ENCODE measurements at regions of chr15 and their contacts with region 1.

Region 1: DNA sequence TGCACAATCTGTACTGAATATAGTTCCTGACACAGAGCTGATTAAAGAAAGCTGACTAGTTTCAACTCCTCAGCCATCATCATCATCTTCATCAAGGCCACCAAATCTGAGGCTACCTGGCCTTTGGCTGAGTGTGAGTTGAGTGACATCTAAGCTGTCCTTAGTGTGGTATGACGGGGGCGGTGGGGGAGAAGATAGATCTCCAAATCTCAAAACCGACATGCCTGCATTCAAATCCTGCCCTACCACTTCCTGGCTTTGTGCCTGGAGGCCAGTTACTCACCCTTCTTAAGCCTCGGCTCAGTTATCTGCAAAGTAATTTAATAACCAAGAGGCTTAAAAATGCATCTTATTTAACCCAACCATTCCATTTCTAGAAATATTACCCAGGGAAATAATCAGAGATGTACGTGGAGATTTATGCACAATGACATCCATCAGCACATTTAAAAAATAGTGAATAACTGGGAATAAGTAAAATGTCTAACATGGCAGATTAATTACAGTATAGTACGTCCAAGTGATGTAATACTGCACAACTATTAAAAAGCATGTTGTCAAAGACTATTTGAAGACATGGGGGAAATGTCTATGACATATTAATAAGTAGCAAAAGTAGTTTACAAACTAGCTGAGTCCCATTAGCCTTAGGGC is 167.4 kb downstream of the NTRK3 start:
- DNase-seq: no peak
- H3K4me3 ChIP-seq: no peak overlapping the region
- H3K27ac ChIP-seq: peak overlapping the region in 1 of 2 donors; percentile 33
- H3K4me1 ChIP-seq: peaks cover 0 to 65% (median 34%) of the 10 kb centered on the region in 4 donors
- H3K27me3 ChIP-seq: no peaks in the 10 kb centered on the region
- CTCF ChIP-seq: no peak

Region 2: DNA sequence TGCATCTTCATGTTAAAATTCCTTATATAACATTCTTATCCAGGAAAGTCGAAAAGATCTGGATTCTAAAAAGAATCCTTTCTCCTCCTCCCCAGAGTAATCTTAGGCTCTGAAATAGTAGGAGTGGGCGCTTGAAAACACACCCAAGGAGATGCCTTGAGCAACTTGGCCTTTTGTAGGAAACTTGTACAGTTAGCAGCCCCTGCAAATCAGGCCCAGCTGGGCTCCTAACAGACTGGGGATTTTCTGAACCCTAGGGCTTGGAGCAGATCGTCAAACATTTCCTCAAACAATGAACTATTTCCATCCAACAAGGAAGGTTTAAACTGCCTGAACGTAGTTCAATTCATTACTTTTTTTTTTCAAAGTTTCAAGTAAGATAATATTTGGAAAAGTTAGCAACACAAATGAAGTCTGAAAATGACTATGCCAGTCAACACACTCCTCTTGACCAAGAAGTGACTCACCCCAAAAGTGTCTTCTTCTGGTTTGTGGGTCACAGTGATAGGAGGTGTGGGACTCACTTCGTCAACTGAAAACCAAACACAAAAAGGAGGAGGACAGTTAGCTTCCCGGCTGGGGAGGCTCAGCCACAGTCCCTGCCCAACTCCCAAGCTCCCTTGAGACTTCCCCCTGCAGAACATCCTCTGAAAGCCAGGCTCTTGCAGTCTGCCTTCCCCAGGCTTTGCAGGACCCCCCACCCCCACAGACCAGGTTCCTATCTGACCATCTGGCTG is 37.8 kb after region 1 on chr15:
- intact Hi-C with region 1: loop called (anchors 5 kb)
- DNase-seq: no peak
- H3K4me3 ChIP-seq: no peak overlapping the region
- H3K27ac ChIP-seq: peak overlapping the region; percentile 70 to 78
- H3K4me1 ChIP-seq: peaks cover 0 to 44% (median 25%) of the 10 kb centered on the region in 4 donors
- H3K27me3 ChIP-seq: no peaks in the 10 kb centered on the region
- CTCF ChIP-seq: no peak

Region 3: GRCh38 chr15:88161636-88162035 is 72.5 kb after region 1 on chr15:
- intact Hi-C with region 1: no loop called
- DNase-seq: no peak
- H3K4me3 ChIP-seq: no peak overlapping the region
- H3K27ac ChIP-seq: no peak overlapping the region
- H3K4me1 ChIP-seq: peaks cover 0 to 11% (median 0%) of the 10 kb centered on the region in 4 donors
- H3K27me3 ChIP-seq: no peaks in the 10 kb centered on the region
- CTCF ChIP-seq: no peak

Measured in tibial artery (tissue), 4 donors.